ENCODE measurements at regions of chr7 and their contacts with region 1.

Region 1: GRCh38 chr7:120792091-120792860 is 65.7 kb downstream of the TSPAN12 start:
- DNase-seq: peak; percentile 61 to 90 (median 79)
- ATAC-seq: peak; percentile 89 to 99 (median 97)
- H3K4me3 ChIP-seq: no peak overlapping the region
- H3K27ac ChIP-seq: no peak overlapping the region
- H3K4me1 ChIP-seq: peaks cover 0 to 6% (median 0%) of the 10 kb centered on the region in 3 donors
- H3K27me3 ChIP-seq: no peaks in the 10 kb centered on the region
- CTCF ChIP-seq: peak; percentile 64 to 83 (median 75)

Region 2: GRCh38 chr7:120842121-120842621 is 49.9 kb after region 1 on chr7:
- intact Hi-C with region 1: loop called in 1 of 3 experiments (anchors 10 kb)
- DNase-seq: peak in 4 of 6 donors; percentile 22 to 62 (median 39)
- ATAC-seq: peak; percentile 93 to 98 (median 96)
- H3K4me3 ChIP-seq: no peak overlapping the region
- H3K27ac ChIP-seq: peak overlapping the region in 2 of 4 donors; percentile 43 to 62
- H3K4me1 ChIP-seq: peaks cover 12 to 19% (median 16%) of the 10 kb centered on the region in 3 donors
- H3K27me3 ChIP-seq: no peaks in the 10 kb centered on the region
- CTCF ChIP-seq: no peak

Measured in pancreas (tissue), 10 donors.